Common myeloid progenitor, CD34-positive (primary cell): ENCODE measurements at regions of chr2 and their contacts with region 1.

Region 1: DNA sequence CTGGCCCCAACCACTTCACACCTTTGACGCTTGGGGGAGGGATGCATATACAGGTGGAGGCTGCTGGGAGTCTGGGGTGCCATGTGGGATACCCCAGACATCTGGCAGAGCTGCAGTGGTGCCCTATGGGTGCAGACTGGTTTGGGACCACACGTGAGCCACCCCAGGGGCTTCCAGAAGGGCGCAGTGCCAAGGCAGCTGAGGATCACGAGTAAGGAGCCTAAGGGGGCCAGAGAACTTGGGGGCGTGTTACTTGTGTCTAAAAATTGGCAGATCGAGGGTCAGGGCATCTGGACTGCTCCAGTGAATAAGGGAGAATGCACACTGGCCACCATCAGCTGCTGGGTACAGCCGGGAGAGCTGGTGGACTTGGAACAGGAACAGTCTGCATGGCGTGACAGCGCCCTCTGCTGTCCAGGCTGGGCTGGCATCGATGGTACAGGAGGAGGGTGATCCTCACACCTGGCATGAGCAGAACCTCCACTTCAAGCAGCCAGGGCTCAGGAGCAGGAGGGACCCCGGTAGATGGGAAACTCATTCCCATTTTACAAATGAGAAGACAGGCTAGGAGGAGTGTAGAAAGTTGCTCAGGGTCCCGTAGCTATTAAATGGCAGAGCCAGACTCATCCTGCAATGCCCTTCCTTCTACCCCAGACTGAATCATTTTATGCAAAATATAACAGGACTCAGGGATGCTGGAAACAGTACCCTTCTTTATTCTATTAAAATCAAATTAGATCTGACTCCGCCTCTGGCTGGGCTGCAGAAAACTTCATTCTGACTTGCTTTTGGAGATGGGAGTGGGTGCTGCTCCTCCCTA is 60.4 kb downstream of the ATOH8 start:
- DNase-seq: peak; percentile 81 to 92 (median 85)
- H3K4me3 ChIP-seq: no peak overlapping the region
- H3K27ac ChIP-seq: no peak overlapping the region
- H3K4me1 ChIP-seq: no peaks in the 10 kb centered on the region
- H3K27me3 ChIP-seq: peaks cover 0 to 9% (median 0%) of the 10 kb centered on the region in 5 experiments

Region 2: GRCh38 chr2:85678794-85679672 is 135.2 kb before region 1 on chr2:
- CTCF ChIA-PET with region 1: interaction called, 15 read pairs
- POLR2A ChIA-PET with region 1: no interaction called
- DNase-seq: peak; percentile 54 to 64 (median 57)
- H3K4me3 ChIP-seq: peak overlapping the region in 3 of 7 experiments; percentile 26 to 57 (median 41)
- H3K27ac ChIP-seq: no peak overlapping the region
- H3K4me1 ChIP-seq: peaks cover 0 to 18% (median 13%) of the 10 kb centered on the region in 4 experiments
- H3K27me3 ChIP-seq: peaks cover 0 to 2% (median 0%) of the 10 kb centered on the region in 5 experiments

Region 3: GRCh38 chr2:85728883-85729824 is 85.0 kb before region 1 on chr2:
- CTCF ChIA-PET with region 1: interaction called, 83 read pairs
- POLR2A ChIA-PET with region 1: interaction called, 3 read pairs
- DNase-seq: peak; percentile 59 to 77 (median 73)
- H3K4me3 ChIP-seq: no peak overlapping the region
- H3K27ac ChIP-seq: no peak overlapping the region
- H3K4me1 ChIP-seq: peaks cover 0 to 10% (median 4%) of the 10 kb centered on the region in 4 experiments
- H3K27me3 ChIP-seq: peaks cover 0 to 5% (median 2%) of the 10 kb centered on the region in 5 experiments

Region 4: GRCh38 chr2:85750587-85751575 is 63.3 kb before region 1 on chr2:
- CTCF ChIA-PET with region 1: interaction called, 218 read pairs
- POLR2A ChIA-PET with region 1: interaction called, 7 read pairs
- DNase-seq: peak; percentile 76 to 87 (median 81)
- H3K4me3 ChIP-seq: no peak overlapping the region
- H3K27ac ChIP-seq: no peak overlapping the region
- H3K4me1 ChIP-seq: peaks cover 0 to 30% (median 26%) of the 10 kb centered on the region in 4 experiments
- H3K27me3 ChIP-seq: peaks cover 0 to 71% (median 32%) of the 10 kb centered on the region in 5 experiments

Region 5: DNA sequence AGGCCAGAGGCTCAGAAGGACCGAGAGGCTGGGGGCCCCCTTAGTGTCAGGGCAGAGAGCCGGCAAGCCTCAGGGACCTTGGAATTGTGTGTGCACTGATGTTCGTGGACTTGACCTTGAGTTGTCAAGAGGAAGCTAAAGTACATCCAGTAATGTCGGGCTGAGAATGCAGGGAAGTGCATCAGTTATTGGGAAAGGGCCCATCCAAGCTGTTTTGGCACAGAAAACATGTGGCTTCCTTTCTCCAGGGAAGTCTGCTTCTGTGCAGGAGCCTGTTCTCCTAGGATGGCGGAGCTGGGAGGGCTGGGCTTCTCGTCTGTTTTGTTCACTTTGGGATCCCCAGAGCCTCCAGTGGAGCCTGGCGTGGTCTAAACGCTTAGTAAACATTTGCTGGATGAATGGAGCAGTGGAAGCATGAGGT is 36.7 kb before region 1 on chr2:
- CTCF ChIA-PET with region 1: interaction called, 25 read pairs
- POLR2A ChIA-PET with region 1: no interaction called
- DNase-seq: no peak
- H3K4me3 ChIP-seq: no peak overlapping the region
- H3K27ac ChIP-seq: no peak overlapping the region
- H3K4me1 ChIP-seq: peaks cover 0 to 5% (median 2%) of the 10 kb centered on the region in 4 experiments
- H3K27me3 ChIP-seq: peaks cover 0 to 6% (median 1%) of the 10 kb centered on the region in 5 experiments

Region 6: GRCh38 chr2:86079981-86080911 is 266.1 kb after region 1 on chr2:
- CTCF ChIA-PET with region 1: interaction called, 22 read pairs
- POLR2A ChIA-PET with region 1: no interaction called
- DNase-seq: peak; percentile 72 to 84 (median 83)
- H3K4me3 ChIP-seq: no peak overlapping the region
- H3K27ac ChIP-seq: no peak overlapping the region
- H3K4me1 ChIP-seq: peaks cover 0 to 14% (median 6%) of the 10 kb centered on the region in 4 experiments
- H3K27me3 ChIP-seq: no peaks in the 10 kb centered on the region